ENCODE measurements at regions of chr22 and their contacts with region 1.

Region 1: DNA sequence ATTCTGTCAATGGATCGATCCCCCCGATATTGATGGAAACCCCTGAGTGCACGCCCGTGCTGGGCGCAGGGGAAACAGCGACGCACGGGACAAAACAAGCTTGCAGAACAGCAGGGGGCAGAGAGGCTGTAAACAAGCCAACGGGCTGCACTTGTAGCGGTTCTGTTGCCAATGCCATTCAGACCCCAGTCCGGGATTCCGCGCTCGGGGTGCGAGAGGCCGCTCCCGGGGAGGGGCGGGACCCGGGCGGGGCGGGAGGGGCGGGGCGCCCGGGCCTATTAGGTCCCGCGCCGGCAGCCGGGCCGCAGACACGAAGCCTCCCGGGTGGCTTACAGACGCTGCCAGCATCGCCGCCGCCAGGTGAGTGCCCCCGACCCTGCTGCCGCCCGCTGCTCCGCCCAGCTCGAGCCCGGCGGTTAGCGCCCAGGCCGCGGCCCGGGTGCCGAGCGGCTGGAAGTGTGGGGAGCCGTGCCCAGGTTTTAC is at the start of gene BIK:
- DNase-seq: peak; percentile 94
- H3K4me3 ChIP-seq: peak within 1 kb of the TSS; percentile 97
- H3K27ac ChIP-seq: peak within 1 kb of the TSS; percentile 96
- H3K4me1 ChIP-seq: peaks cover 51% of the 10 kb centered on the region
- CTCF ChIP-seq: peak; percentile 75
- total RNA-seq, gene BIK: 104 and 143 TPM in 2 replicates

Region 2: GRCh38 chr22:42920101-42920820 is 190.2 kb before region 1 on chr22:
- CTCF ChIA-PET with region 1: no interaction called
- POLR2A ChIA-PET with region 1: no interaction called
- intact Hi-C with region 1: no loop called
- DNase-seq: no peak
- H3K4me3 ChIP-seq: no peak overlapping the region
- H3K27ac ChIP-seq: no peak overlapping the region
- H3K4me1 ChIP-seq: no peaks in the 10 kb centered on the region
- CTCF ChIP-seq: no peak

Region 3: GRCh38 chr22:43088979-43089717 is 21.3 kb before region 1 on chr22 and contains the start of gene TTLL1:
- CTCF ChIA-PET with region 1: no interaction called
- POLR2A ChIA-PET with region 1: interaction called, 6 read pairs
- intact Hi-C with region 1: loop called (anchors 2 kb)
- DNase-seq: peak; percentile 91
- H3K4me3 ChIP-seq: peak within 1 kb of the TSS; percentile 75
- H3K27ac ChIP-seq: peak within 1 kb of the TSS; percentile 48
- H3K4me1 ChIP-seq: peaks cover 21% of the 10 kb centered on the region
- CTCF ChIP-seq: no peak
- total RNA-seq, gene TTLL1: 5.5 and 5.8 TPM in 2 replicates

Region 4: DNA sequence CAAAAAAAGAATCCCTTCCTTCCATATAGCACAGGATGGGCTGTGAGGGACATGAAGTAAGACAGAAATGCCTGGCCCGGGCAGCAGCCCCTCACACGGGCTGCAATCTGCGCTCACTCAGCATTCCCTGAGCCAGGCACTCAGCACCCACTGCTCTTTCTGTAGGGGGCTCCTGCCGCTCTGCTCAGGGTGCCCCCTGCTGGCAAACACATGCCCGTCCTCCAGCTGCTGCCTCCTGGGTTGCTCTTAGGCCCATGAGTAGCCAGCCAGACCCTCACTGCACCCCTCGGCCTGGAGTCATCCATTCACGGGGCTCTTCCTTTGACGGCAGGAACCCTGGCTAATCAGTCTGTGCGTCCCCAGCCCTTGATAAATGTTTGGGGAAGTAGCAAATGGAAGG is 25.8 kb after region 1 on chr22:
- CTCF ChIA-PET with region 1: no interaction called
- POLR2A ChIA-PET with region 1: interaction called, 3 read pairs
- intact Hi-C with region 1: loop called (anchors 1 kb)
- DNase-seq: peak; percentile 82
- H3K4me3 ChIP-seq: no peak overlapping the region
- H3K27ac ChIP-seq: peak overlapping the region; percentile 52
- H3K4me1 ChIP-seq: peaks cover 18% of the 10 kb centered on the region
- CTCF ChIP-seq: peak; percentile 92

Region 5: DNA sequence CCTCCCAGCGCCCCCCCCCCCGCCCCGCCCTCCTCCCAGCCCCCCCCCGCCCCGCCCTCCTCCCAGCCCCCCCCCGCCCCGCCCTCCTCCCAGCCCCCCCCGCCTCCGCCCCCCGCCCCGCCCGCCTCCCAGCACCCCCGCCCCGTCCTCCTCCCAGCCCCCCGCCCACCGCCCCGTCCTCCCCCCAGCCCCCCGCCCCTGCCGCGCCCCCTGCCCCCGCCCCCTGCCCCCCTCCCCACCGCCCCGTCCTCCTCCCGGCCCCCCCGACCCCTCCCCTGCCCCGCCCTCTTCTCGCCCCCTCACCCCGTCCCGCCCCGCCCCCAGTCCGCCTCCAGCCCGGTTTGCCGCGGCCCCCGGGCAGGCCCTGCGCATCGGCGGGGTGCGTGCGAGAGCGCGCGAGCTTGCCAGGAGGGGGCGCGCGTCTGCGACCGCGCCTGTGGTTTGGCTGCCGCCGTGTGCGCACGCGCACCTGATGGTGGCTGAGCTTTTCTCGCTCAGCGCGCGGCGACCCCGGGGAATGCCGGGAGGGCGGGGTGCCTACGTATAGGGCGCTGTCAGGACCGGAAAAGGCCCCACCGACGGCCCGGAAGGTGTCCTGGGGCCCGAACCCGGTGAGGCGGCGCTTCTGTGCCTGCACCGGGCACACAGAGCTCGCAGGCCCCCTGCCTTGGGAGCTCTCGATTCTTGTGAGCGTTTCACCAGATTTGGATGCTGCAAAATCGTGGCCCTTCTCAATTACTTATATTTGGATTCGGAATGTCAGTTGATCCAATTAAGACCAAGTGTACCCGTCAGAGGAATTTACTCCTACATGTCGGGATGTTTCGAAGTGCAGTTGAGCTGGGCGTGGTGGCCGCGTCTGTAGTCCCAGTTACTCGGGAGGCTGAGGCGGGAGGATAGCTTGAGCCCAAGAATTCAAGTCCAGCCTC is 77.0 kb after region 1 on chr22:
- CTCF ChIA-PET with region 1: no interaction called
- POLR2A ChIA-PET with region 1: no interaction called
- intact Hi-C with region 1: loop called (anchors 1 kb)
- DNase-seq: peak; percentile 97
- H3K4me3 ChIP-seq: peak overlapping the region; percentile 70
- H3K27ac ChIP-seq: peak overlapping the region; percentile 80
- H3K4me1 ChIP-seq: peaks cover 20% of the 10 kb centered on the region
- CTCF ChIP-seq: peak; percentile 49; the same call in 1 of the 2 replicates

Region 6: GRCh38 chr22:43230971-43231723 is 120.7 kb after region 1 on chr22:
- CTCF ChIA-PET with region 1: no interaction called
- POLR2A ChIA-PET with region 1: no interaction called
- intact Hi-C with region 1: no loop called
- DNase-seq: peak; percentile 70
- H3K4me3 ChIP-seq: no peak overlapping the region
- H3K27ac ChIP-seq: no peak overlapping the region
- H3K4me1 ChIP-seq: peaks cover 4% of the 10 kb centered on the region
- CTCF ChIP-seq: peak; percentile 98